CD4-positive, alpha-beta memory T cell (primary cell): ENCODE measurements at regions of chr1 and their contacts with region 1.

Region 1: GRCh38 chr1:226656601-226657277 is 82.3 kb downstream of the ITPKB start:
- DNase-seq: peak; percentile 61 to 85 (median 63)
- H3K4me3 ChIP-seq: peak overlapping the region in 1 of 2 donors; percentile 11
- H3K4me3 Mint-ChIP-seq: peak overlapping the region; percentile 48 to 88 (median 60)
- H3K27ac ChIP-seq: no peak overlapping the region
- H3K27ac Mint-ChIP-seq: peak overlapping the region in 2 of 7 donors; percentile 93 to 97
- H3K4me1 ChIP-seq: no peaks in the 10 kb centered on the region
- H3K4me1 Mint-ChIP-seq: peaks cover 0 to 82% (median 36%) of the 10 kb centered on the region in 4 donors
- H3K27me3 ChIP-seq: no peaks in the 10 kb centered on the region
- H3K27me3 Mint-ChIP-seq: no peaks in the 10 kb centered on the region

Region 2: DNA sequence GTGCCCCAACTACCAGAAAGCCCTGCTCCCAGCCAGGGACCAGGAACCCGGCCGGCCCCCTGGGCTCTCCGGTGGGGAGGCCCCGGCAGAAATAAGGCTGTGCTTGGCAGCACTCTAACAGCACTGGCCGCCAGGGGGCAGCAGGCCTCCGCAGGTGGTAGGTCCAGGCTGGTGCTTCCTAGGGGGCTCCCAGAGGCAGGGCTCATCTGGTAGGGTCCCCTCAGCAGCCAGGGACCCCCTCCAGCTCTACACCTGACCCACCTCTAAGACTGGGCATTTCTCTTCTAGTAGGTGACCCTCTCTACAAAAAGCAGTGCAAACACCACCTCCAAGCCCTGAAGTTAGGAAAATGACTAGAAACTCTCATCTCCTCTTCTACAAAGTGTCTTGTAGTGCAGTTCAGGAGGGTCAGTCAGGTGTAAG is 22.6 kb before region 1 on chr1:
- CTCF ChIA-PET with region 1: interaction called, 21 read pairs
- POLR2A ChIA-PET with region 1: interaction called, 18 read pairs
- intact Hi-C with region 1: loop called (anchors 2 kb)
- DNase-seq: peak; percentile 74 to 81 (median 78)
- H3K4me3 ChIP-seq: no peak overlapping the region
- H3K4me3 Mint-ChIP-seq: peak overlapping the region in 7 of 8 donors; percentile 1 to 82 (median 53)
- H3K27ac ChIP-seq: peak overlapping the region; percentile 56
- H3K27ac Mint-ChIP-seq: peak overlapping the region; percentile 72 to 94 (median 88)
- H3K4me1 ChIP-seq: peaks cover 53% of the 10 kb centered on the region
- H3K4me1 Mint-ChIP-seq: peaks cover 28 to 70% (median 53%) of the 10 kb centered on the region in 4 donors
- H3K27me3 ChIP-seq: no peaks in the 10 kb centered on the region
- H3K27me3 Mint-ChIP-seq: no peaks in the 10 kb centered on the region

Region 3: DNA sequence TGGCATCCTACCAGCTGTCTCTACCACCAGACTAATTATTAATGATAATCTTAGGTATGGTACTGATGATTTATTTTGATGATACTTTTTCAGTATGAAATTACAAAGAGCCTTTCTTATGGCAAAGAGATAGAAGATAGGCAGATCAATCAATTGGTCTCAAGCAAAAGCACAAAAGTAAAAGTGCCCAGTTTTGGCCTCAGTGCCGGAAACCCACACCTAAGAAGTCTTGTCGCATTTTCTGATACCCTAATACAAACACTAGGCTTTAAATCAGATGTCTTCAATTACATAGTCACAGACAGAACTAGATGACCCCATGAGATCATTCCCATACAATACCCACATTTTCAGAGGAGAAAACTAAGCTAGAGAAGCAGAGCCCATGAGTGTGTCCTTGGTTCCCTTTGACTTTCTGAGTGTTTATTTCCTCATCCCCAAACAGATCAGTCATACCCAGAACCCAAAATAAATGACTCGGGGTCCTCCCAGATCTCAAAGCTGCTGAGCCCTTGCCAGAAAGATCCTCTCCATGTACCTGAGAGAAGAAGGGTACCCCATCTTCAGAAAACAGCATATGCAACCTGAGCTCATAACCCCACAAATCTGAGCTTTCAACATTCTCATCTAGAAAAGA is 74.6 kb after region 1 on chr1:
- CTCF ChIA-PET with region 1: interaction called, 7 read pairs
- POLR2A ChIA-PET with region 1: interaction called, 42 read pairs
- intact Hi-C with region 1: no loop called
- DNase-seq: peak in 2 of 5 donors; percentile 17 to 24
- H3K4me3 ChIP-seq: peak overlapping the region; percentile 34 to 48
- H3K4me3 Mint-ChIP-seq: peak overlapping the region; percentile 84 to 99 (median 96)
- H3K27ac ChIP-seq: peak overlapping the region; percentile 85
- H3K27ac Mint-ChIP-seq: peak overlapping the region; percentile 89 to 100 (median 94)
- H3K4me1 ChIP-seq: peaks cover 80% of the 10 kb centered on the region
- H3K4me1 Mint-ChIP-seq: peaks cover 50 to 95% (median 68%) of the 10 kb centered on the region in 4 donors
- H3K27me3 ChIP-seq: no peaks in the 10 kb centered on the region
- H3K27me3 Mint-ChIP-seq: no peaks in the 10 kb centered on the region

Region 4: GRCh38 chr1:226798427-226799411 is 142.0 kb after region 1 on chr1:
- CTCF ChIA-PET with region 1: no interaction called
- POLR2A ChIA-PET with region 1: interaction called, 11 read pairs
- intact Hi-C with region 1: no loop called
- DNase-seq: peak; percentile 64 to 76 (median 68)
- H3K4me3 ChIP-seq: peak overlapping the region in 1 of 2 donors; percentile 5
- H3K4me3 Mint-ChIP-seq: peak overlapping the region; percentile 27 to 90 (median 80)
- H3K27ac ChIP-seq: peak overlapping the region; percentile 80
- H3K27ac Mint-ChIP-seq: peak overlapping the region; percentile 97 to 100 (median 99)
- H3K4me1 ChIP-seq: peaks cover 38% of the 10 kb centered on the region
- H3K4me1 Mint-ChIP-seq: peaks cover 26 to 45% (median 34%) of the 10 kb centered on the region in 4 donors
- H3K27me3 ChIP-seq: no peaks in the 10 kb centered on the region
- H3K27me3 Mint-ChIP-seq: no peaks in the 10 kb centered on the region